GM10248 (cell line): ENCODE measurements at regions of chr2 and their contacts with region 1.

Region 1: GRCh38 chr2:197851451-197851850 is 47.1 kb downstream of the PLCL1 start:
- DNase-seq: peak; percentile 18
- CTCF ChIP-seq: peak; percentile 30

Region 2: GRCh38 chr2:197760293-197760657 is 91.2 kb before region 1 on chr2:
- CTCF ChIA-PET with region 1: no interaction called
- POLR2A ChIA-PET with region 1: no interaction called
- DNase-seq: no peak
- CTCF ChIP-seq: no peak

Region 3: DNA sequence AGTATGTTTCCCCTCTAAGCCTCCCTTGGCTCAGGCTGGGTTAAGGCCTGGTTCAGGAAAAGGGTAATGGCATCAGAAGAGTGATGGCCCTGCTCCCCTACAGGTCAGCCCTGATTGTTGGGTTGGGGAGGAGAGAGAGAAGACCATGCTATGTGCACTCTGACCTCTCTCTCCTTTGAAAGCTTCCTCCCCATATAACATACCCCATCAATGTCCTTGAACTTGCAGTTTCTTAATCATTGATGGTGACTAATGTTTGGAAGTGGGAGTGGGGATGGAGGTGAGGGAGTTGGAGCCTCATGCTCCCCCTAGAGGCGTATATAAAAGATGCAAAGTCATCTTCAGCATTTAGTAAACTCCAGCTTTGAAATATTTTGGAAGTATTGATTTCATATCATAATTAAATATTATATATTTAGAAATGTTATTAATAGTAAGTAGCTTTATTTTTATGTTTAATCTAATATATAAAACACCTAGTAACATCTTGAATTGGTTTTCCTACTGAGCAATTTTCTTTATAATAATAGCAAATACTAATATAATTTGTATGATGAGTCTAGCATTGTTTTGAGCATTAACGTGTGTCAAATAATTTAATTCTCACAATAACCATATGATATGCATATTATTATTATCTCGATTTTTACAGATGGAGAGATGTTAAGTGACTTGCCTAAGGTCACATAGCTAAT is 38.2 kb before region 1 on chr2:
- CTCF ChIA-PET with region 1: interaction called, 10 read pairs
- POLR2A ChIA-PET with region 1: no interaction called
- DNase-seq: peak; percentile 14
- CTCF ChIP-seq: peak; percentile 48

Region 4: GRCh38 chr2:197838036-197838435 is 13.4 kb before region 1 on chr2:
- CTCF ChIA-PET with region 1: interaction called, 31 read pairs
- POLR2A ChIA-PET with region 1: no interaction called
- DNase-seq: peak; percentile 64
- CTCF ChIP-seq: no peak

Region 5: DNA sequence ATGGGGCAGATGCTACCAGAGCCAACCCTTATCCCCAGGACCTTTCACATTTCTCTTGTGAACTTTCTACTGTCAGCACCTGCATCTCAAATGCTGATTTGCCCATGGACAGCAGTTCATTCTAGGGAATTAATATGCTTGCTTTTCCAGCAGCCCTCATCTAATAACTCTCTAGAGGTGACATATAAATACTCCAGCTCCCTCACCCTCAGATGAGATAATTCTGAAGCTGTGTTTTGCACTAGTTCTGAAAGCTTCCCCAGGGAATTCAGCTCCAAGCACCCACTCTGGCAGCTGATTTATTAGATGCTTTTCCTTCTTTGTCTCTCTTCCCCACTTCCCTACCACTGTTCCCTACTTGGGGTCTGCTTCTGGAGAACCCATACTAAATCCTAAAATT is 15.0 kb after region 1 on chr2:
- CTCF ChIA-PET with region 1: interaction called, 16 read pairs
- POLR2A ChIA-PET with region 1: no interaction called
- DNase-seq: no peak
- CTCF ChIP-seq: no peak

Region 6: GRCh38 chr2:197958592-197959150 is 107.2 kb after region 1 on chr2:
- CTCF ChIA-PET with region 1: no interaction called
- POLR2A ChIA-PET with region 1: no interaction called
- DNase-seq: no peak
- CTCF ChIP-seq: no peak

Region 7: GRCh38 chr2:197969391-197969893 is 118.0 kb after region 1 on chr2:
- CTCF ChIA-PET with region 1: no interaction called
- POLR2A ChIA-PET with region 1: no interaction called
- DNase-seq: no peak
- CTCF ChIP-seq: no peak